Endothelial cell of umbilical vein (primary cell): ENCODE measurements at regions of chr1 and their contacts with region 1.

Region 1: DNA sequence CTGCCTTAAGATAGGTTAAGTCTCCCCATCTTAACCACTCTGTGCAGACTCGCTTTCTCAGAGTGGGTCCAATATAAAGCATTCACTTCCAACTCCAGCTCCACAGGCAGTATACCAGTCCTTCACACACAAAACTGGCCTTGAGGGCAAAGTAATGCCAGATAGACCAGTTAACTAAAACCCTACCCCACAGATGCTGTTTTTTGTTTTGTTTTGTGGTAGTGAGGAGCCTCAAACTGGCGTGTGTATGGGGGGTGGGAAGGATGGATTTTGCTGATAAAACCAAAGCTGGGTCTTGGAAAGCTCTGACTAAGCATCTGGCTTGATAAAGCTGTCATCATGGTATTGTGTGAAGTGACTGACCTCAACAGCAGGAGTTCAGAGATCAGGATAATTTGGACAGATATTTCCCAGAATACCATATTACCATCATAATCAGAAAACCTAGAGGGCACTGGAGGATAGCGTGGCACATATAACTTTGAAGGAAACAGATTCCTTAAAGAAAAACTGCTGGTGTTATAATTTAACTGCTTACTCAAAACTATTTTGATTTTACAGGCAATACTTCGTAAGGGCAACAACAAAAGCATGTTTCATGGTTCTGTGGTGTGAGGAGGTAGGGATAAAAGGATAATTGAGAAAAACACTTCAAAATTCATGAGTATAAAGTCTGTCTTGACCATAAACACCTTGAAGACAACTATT is 29.6 kb upstream of the CPLANE2 start:
- DNase-seq: peak; percentile 96
- H3K4me3 ChIP-seq: no peak overlapping the region
- H3K27ac ChIP-seq: peak overlapping the region; percentile 30
- H3K4me1 ChIP-seq: peaks cover 27% of the 10 kb centered on the region
- H3K27me3 ChIP-seq: no peaks in the 10 kb centered on the region
- CTCF ChIP-seq: no peak
- POLR2A ChIP-seq: no peak

Region 2: DNA sequence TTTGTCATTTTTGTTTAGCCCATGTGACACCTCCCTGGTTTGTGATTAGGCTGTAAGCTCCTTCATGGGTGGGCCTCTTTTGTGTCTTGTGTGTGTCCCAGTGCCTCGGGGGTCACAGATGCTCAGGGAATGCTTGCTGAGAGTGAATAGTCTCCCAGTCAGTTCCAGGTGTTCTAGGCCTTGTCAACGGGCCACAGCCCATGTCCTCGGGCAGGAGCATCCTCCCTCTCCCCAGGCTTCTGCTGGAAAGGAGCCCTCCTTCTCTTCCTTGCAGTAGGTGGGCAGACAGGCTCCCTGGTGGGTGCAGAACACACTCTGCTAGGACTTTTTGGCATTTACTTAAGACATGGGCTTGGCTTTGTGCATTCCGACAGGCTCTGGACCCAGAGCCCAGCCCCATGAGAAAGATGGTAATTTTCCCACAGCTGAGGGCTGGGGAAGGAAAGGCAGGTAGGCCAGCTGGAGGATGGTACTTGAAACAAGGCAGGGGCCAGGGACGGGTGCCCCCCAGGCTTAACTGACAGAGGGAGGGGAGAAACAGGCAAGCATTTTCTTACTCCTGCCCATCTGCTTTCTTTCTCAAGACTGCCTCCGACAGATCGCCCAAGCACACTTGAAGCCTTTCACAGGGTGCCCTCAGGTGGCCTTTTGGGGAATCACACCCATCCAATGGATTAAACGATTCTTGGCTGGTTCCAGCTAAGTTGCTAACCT is 22.5 kb before region 1 on chr1:
- CTCF ChIA-PET with region 1: interaction called, 3 read pairs
- POLR2A ChIA-PET with region 1: no interaction called
- dilution Hi-C with region 1: no loop called
- intact Hi-C with region 1: loop called (anchors 2 kb)
- DNase-seq: peak; percentile 87
- H3K4me3 ChIP-seq: no peak overlapping the region
- H3K27ac ChIP-seq: no peak overlapping the region
- H3K4me1 ChIP-seq: peaks cover 17% of the 10 kb centered on the region
- H3K27me3 ChIP-seq: no peaks in the 10 kb centered on the region
- CTCF ChIP-seq: peak; percentile 83 to 85
- POLR2A ChIP-seq: no peak